A549 (cell line): ENCODE measurements at regions of chr17 and their contacts with region 1.

Region 1: DNA sequence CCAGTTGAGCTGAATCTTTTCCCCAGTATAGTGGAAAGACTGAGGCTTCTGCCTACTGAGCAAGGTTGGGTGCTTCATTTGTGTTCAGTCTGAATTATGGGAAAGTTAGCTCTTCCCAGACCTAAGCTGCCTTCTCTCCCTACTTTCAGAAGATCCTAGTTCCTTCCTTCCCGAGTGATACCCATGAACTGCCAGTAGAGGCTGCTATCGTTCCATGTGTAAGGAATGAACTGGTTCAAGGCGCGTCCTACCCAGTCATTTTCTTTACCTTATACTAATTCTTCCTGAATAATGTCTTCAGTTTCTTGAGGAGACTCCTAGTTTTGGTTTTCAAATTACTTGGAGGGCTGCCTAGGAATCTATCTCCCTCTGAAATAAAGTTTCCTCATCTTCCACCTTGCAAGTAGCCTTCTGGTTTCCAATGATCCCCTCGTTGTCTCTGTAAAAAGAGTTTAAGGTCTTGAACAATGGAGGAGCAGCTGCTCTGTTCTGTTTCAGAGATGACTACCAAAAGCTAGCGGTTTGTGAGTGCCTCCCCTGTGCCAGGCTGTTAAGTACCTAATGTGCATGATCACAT is 934 bp upstream of the AOC2 start:
- DNase-seq: peak; percentile 82 to 91
- ATAC-seq: peak; percentile 80 to 85
- H3K4me3 ChIP-seq: no peak overlapping the region
- H3K27ac ChIP-seq: no peak overlapping the region
- H3K4me1 ChIP-seq: no peaks in the 10 kb centered on the region
- CTCF ChIP-seq: peak; percentile 99
- EP300 ChIP-seq: no peak
- POLR2A ChIP-seq: no peak
- RAD21 ChIP-seq: peak; percentile 96 to 99

Region 2: DNA sequence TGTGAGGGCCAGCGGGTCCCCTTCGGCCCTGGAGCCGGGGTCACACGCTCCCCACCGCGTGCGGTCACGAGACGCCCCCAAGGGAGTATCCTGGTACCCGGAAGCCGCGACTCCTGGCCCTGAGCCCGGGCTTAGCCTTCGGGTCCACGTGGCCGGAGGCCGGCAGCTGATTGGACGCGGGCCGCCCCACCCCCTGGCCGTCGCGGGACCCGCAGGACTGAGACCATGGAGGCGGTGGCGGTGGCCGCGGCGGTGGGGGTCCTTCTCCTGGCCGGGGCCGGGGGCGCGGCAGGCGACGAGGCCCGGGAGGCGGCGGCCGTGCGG is 307.4 kb before region 1 on chr17 and contains the start of gene NAGLU:
- CTCF ChIA-PET with region 1: no interaction called
- POLR2A ChIA-PET with region 1: no interaction called
- DNase-seq: peak; percentile 91 to 100
- ATAC-seq: peak; percentile 88 to 89
- H3K4me3 ChIP-seq: peak within 1 kb of the TSS; percentile 82
- H3K27ac ChIP-seq: peak within 1 kb of the TSS; percentile 93 to 97
- H3K4me1 ChIP-seq: peaks cover 31% of the 10 kb centered on the region
- CTCF ChIP-seq: no peak
- EP300 ChIP-seq: no peak
- POLR2A ChIP-seq: peak; percentile 54
- RAD21 ChIP-seq: no peak
- polyA plus RNA-seq, gene NAGLU: 17.8 and 18.0 TPM in 2 replicates

Region 3: DNA sequence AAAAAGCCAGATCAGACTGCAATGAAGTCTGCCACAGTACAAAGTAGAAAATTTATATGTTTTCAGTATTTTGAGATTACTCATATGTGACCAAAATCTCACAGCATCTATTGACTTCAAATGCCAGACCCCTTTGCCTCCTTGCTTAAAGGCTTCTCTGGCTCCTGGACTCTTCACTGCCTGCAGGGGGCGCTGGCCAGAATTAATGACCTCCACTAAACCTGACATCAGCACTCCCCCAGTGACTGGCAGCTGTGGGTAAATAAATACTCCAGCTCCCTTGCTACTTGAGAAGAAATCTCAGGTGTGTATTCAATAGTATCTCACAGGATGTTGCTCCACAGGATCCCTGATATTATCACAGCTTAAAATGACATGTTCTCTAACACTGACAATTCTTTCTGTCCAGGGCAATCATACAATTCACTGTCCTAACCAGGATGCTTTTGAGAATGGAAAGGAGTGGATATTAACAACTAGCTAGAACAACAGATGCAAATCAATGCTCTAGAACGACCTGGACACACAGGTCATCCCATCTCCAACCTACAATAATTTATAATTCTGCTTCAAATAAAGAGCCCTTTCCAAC is 23.4 kb before region 1 on chr17:
- CTCF ChIA-PET with region 1: interaction called, 74 read pairs
- POLR2A ChIA-PET with region 1: interaction called, 6 read pairs
- DNase-seq: peak; percentile 84 to 85
- ATAC-seq: peak; percentile 44 to 66; a peak in 3 of 6 replicates
- H3K4me3 ChIP-seq: no peak overlapping the region
- H3K27ac ChIP-seq: no peak overlapping the region
- H3K4me1 ChIP-seq: peaks cover 21% of the 10 kb centered on the region
- CTCF ChIP-seq: peak; percentile 82
- EP300 ChIP-seq: no peak
- POLR2A ChIP-seq: no peak
- RAD21 ChIP-seq: peak; percentile 26 to 40; a peak in 2 of 5 replicates

Region 4: DNA sequence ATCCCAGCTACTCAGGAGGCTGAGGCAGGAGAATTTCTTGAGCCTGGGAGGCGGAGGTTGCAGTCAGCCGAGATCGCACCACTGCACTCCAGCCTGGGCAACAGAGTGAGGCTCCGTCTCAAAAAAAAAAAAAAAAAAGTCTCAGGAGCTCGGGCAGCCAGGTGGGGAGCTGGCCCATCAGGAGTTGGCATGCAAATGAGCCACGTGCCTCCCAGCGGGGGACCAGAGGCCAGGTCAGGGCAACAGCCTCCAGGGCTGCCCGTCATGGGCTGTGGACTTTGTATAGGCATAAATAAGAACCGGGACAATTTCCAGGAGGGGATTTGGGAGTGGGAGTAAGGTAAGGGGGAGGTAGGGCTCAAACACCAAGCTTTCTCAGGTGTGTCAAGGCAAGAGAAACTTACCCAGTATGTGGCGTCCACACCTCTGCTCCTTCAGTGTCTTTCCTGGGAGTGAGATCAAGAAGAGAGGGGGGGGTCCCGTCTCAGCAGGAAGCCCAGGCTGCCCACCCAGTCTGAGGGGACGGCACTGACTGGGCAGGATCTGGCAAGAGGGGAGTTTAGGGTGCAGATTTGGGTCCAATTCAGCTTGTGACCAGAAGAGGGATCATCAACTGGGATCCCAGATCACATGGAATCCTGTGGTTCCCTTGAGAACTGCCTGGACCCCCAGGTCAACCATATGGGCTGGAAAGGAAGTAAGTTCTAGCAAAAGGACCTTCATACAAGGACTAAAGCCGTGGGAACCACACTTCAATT is 34.9 kb after region 1 on chr17:
- CTCF ChIA-PET with region 1: interaction called, 22 read pairs
- POLR2A ChIA-PET with region 1: no interaction called
- DNase-seq: peak in 1 of 2 experiments; percentile 25
- ATAC-seq: peak; percentile 53 to 65; a peak in 4 of 6 replicates
- H3K4me3 ChIP-seq: no peak overlapping the region
- H3K27ac ChIP-seq: no peak overlapping the region
- H3K4me1 ChIP-seq: no peaks in the 10 kb centered on the region
- CTCF ChIP-seq: no peak
- EP300 ChIP-seq: no peak
- POLR2A ChIP-seq: no peak
- RAD21 ChIP-seq: no peak

Region 5: GRCh38 chr17:42913522-42913921 is 70.1 kb after region 1 on chr17:
- CTCF ChIA-PET with region 1: interaction called, 372 read pairs
- POLR2A ChIA-PET with region 1: no interaction called
- DNase-seq: no peak
- ATAC-seq: no peak
- H3K4me3 ChIP-seq: no peak overlapping the region
- H3K27ac ChIP-seq: no peak overlapping the region
- H3K4me1 ChIP-seq: peaks cover 3% of the 10 kb centered on the region; the same call in 2 of the 3 replicates
- CTCF ChIP-seq: no peak
- EP300 ChIP-seq: no peak
- POLR2A ChIP-seq: no peak
- RAD21 ChIP-seq: no peak

Region 6: GRCh38 chr17:42944211-42944610 is 100.8 kb after region 1 on chr17:
- CTCF ChIA-PET with region 1: interaction called, 303 read pairs
- POLR2A ChIA-PET with region 1: no interaction called
- DNase-seq: no peak
- ATAC-seq: no peak
- H3K4me3 ChIP-seq: no peak overlapping the region
- H3K27ac ChIP-seq: no peak overlapping the region
- H3K4me1 ChIP-seq: no peaks in the 10 kb centered on the region
- CTCF ChIP-seq: no peak
- EP300 ChIP-seq: no peak
- POLR2A ChIP-seq: no peak
- RAD21 ChIP-seq: no peak

Region 7: GRCh38 chr17:42989726-42990652 is 146.5 kb after region 1 on chr17:
- CTCF ChIA-PET with region 1: interaction called, 15 read pairs
- POLR2A ChIA-PET with region 1: interaction called, 4 read pairs
- DNase-seq: peak; percentile 64 to 76
- ATAC-seq: peak; percentile 75 to 76; a peak in 5 of 6 replicates
- H3K4me3 ChIP-seq: peak overlapping the region; percentile 15
- H3K27ac ChIP-seq: peak overlapping the region; percentile 68 to 87
- H3K4me1 ChIP-seq: peaks cover 40% of the 10 kb centered on the region
- CTCF ChIP-seq: no peak
- EP300 ChIP-seq: no peak
- POLR2A ChIP-seq: no peak
- RAD21 ChIP-seq: no peak

Region 8: DNA sequence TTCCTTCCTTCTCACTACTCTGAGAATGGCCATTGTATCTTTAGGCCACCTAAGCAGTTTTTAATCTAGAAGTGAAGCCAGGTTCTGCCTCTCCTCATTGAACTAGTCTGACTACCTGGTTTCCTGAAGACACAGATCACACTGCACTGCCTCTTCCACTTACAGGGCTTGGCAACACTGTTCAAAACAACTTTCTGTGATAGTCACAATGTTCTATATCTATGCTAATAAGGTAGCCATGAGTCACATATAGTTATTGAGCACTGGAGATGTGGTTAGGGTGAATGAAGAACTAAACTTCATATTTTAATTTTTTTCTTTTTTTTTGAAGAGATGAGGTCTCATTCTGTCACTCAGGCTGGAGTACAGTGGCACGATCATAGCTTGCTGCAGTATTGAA is 208.5 kb after region 1 on chr17:
- CTCF ChIA-PET with region 1: no interaction called
- POLR2A ChIA-PET with region 1: no interaction called
- DNase-seq: no peak
- ATAC-seq: no peak
- H3K4me3 ChIP-seq: no peak overlapping the region
- H3K27ac ChIP-seq: no peak overlapping the region
- H3K4me1 ChIP-seq: no peaks in the 10 kb centered on the region
- CTCF ChIP-seq: no peak
- EP300 ChIP-seq: no peak
- POLR2A ChIP-seq: no peak
- RAD21 ChIP-seq: no peak